ENCODE measurements at regions of chr1 and their contacts with region 1.

Region 1: DNA sequence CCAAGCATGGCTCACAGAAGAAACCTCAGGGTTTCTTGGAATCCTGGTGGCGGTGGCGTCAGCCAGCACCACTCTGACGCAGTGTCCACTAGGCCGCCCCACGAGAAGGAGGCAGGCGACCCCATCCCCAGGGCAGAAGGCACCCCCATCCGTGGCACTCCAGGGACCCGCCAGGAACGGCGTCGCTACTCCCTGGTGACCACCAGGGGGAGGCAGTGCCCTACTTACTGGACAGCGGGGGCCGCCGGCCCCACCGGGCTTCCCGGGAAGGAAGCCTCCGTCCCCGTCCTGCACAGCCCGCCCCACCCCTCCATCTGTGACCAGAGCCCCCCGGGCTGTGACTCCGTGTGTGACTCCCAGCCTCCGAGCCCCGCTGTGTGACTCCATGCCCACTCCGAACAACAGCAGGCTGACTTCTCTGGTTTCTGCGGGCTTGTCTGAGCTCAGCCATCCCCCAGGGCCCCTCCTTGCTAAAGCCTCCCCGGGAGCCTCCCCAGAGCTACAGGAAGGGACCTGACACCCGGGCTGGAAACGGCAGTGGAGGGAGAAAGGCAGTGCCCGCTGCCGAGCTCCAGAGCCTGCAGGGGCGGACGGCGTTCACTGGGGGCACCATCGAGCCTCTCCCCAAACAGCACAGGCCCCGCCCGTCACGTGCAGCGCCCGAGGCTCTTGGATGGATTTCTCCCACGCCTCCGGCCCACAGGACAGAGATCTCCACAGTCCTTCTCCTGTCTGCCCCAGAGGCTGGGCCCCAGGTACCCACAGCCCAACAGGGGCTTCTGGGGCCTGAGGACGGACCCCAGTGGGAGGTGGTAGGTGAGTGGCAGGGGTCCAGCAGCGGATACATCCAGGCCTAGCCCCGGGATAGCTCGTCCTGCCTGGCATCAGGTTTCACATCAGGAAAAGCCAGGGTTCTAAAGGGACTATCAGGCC is 21.1 kb downstream of the KIF17 start:
- DNase-seq: peak; percentile 86
- H3K4me3 ChIP-seq: peak overlapping the region; percentile 49 to 75 (median 49)
- H3K27ac ChIP-seq: peak overlapping the region; percentile 20
- H3K4me1 ChIP-seq: peaks cover 22% of the 10 kb centered on the region
- H3K27me3 ChIP-seq: no peaks in the 10 kb centered on the region
- CTCF ChIP-seq: peak; percentile 56 to 93

Region 2: DNA sequence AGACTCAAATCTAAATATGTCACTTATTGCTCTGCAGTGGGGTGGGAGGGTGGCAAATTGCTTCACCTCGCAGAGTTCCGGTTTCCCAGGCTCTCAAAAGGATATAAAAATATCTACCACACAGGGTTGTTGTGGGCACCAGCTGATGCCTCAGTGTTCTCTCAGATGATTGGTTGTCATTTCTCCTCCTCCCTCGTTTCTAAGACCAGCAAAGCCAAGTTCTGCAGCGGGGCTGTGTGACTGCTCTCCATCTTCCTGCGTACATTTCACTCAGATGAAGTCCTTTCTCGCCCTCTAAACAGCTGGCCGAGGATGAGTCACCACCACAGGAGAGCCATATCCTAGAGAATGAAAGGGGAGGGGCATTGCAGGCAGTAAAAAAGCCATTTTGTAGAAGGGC is 441.0 kb before region 1 on chr1:
- CTCF ChIA-PET with region 1: no interaction called
- dilution Hi-C with region 1: no loop called
- in situ Hi-C with region 1: no loop called
- intact Hi-C with region 1: no loop called
- DNase-seq: peak; percentile 36
- H3K4me3 ChIP-seq: no peak overlapping the region
- H3K27ac ChIP-seq: no peak overlapping the region
- H3K4me1 ChIP-seq: no peaks in the 10 kb centered on the region
- H3K27me3 ChIP-seq: no peaks in the 10 kb centered on the region
- CTCF ChIP-seq: no peak

Region 3: DNA sequence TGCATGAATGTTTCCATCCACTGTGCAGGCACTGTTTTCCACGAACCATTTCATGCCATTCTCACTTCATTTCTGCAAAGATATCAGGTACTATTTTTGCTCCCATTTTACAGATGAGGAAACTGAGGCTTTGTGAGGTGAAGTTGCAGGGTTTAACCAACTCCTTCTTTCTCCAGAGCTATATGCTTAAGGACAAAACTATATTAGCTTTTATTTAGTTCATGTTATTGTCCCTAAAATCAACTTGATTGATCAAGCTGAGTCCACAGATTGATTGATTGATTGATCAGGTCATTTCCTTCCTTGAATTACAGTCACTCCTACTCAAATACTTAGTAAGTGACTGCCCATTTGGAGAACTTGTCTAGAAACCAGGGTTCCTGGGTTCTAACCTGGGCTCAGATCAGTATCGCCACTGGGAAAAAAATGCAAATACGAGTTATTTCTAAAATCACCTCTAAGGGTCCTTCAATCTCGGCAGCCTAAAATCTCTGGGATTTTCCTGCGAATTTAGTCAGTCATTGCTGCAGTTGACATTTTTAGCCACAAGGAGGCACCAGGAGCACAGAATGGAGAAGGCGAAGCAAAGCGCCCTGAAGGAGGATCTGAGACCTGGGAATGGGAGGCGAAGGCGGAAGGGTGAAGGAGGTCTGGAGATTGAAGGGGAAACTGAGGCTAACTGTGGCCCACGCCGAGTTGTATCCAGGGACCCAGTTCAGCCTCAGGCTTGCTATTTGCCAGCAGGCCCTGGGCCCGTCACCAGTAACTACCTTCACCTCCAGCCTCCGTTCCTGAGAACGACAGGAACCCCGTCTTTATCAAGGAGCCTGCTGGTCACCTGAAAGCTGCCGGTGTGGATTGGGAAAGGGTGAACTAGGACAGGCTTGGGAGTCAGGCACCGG is 174.5 kb before region 1 on chr1:
- CTCF ChIA-PET with region 1: no interaction called
- dilution Hi-C with region 1: no loop called
- in situ Hi-C with region 1: no loop called
- intact Hi-C with region 1: loop called (anchors 1 kb)
- DNase-seq: peak; percentile 61
- H3K4me3 ChIP-seq: no peak overlapping the region
- H3K27ac ChIP-seq: no peak overlapping the region
- H3K4me1 ChIP-seq: no peaks in the 10 kb centered on the region
- H3K27me3 ChIP-seq: no peaks in the 10 kb centered on the region
- CTCF ChIP-seq: peak; percentile 94 to 98

Region 4: GRCh38 chr1:20721117-20722061 is 24.7 kb after region 1 on chr1:
- CTCF ChIA-PET with region 1: no interaction called
- dilution Hi-C with region 1: no loop called
- in situ Hi-C with region 1: no loop called
- intact Hi-C with region 1: no loop called
- DNase-seq: no peak
- H3K4me3 ChIP-seq: no peak overlapping the region
- H3K27ac ChIP-seq: no peak overlapping the region
- H3K4me1 ChIP-seq: peaks cover 23% of the 10 kb centered on the region
- H3K27me3 ChIP-seq: no peaks in the 10 kb centered on the region
- CTCF ChIP-seq: no peak

Region 5: GRCh38 chr1:20732588-20733360 is 36.1 kb after region 1 on chr1 and contains the start of gene SH2D5:
- CTCF ChIA-PET with region 1: no interaction called
- dilution Hi-C with region 1: no loop called
- in situ Hi-C with region 1: no loop called
- intact Hi-C with region 1: loop called (anchors 1 kb)
- DNase-seq: peak; percentile 98
- H3K4me3 ChIP-seq: peak within 1 kb of the TSS; percentile 43 to 76 (median 61)
- H3K27ac ChIP-seq: peak within 1 kb of the TSS; percentile 80
- H3K4me1 ChIP-seq: peaks cover 54% of the 10 kb centered on the region
- H3K27me3 ChIP-seq: no peaks in the 10 kb centered on the region
- CTCF ChIP-seq: peak in 1 of 2 donors; percentile 37
- total RNA-seq, gene SH2D5: 13.2 to 65.3 TPM

Region 6: DNA sequence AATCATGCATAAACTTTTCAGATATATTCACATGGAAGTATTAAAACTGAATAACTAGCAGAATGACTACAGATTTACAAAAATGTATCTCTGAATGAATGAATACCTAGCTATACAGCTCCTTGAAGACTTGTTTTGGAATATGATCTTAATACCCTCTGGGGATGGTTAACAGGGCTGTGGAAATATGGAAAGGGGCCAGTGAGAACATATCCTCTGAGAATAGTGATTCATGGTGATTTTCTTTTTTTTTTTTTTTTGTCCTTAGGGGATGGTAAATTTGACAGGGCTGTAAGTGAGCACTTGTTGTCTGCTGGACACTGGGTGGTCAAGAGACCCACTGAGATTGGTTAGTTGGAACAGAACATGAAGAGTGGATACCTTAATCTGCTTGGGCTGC is 171.2 kb after region 1 on chr1:
- CTCF ChIA-PET with region 1: no interaction called
- dilution Hi-C with region 1: no loop called
- in situ Hi-C with region 1: no loop called
- intact Hi-C with region 1: loop called (anchors 10 kb)
- DNase-seq: peak; percentile 22
- H3K4me3 ChIP-seq: no peak overlapping the region
- H3K27ac ChIP-seq: no peak overlapping the region
- H3K4me1 ChIP-seq: no peaks in the 10 kb centered on the region
- H3K27me3 ChIP-seq: no peaks in the 10 kb centered on the region
- CTCF ChIP-seq: no peak

Region 7: GRCh38 chr1:21189906-21190500 is 493.3 kb after region 1 on chr1:
- CTCF ChIA-PET with region 1: interaction called, 10 read pairs
- dilution Hi-C with region 1: no loop called
- in situ Hi-C with region 1: loop called in 1 of 2 experiments (anchors 5 kb)
- intact Hi-C with region 1: loop called (anchors 1 kb)
- DNase-seq: no peak
- H3K4me3 ChIP-seq: no peak overlapping the region
- H3K27ac ChIP-seq: no peak overlapping the region
- H3K4me1 ChIP-seq: no peaks in the 10 kb centered on the region
- H3K27me3 ChIP-seq: no peaks in the 10 kb centered on the region
- CTCF ChIP-seq: no peak

Measured in mammary epithelial cell (primary cell).